ENCODE measurements at regions of chr2 and their contacts with region 1.

Region 1: DNA sequence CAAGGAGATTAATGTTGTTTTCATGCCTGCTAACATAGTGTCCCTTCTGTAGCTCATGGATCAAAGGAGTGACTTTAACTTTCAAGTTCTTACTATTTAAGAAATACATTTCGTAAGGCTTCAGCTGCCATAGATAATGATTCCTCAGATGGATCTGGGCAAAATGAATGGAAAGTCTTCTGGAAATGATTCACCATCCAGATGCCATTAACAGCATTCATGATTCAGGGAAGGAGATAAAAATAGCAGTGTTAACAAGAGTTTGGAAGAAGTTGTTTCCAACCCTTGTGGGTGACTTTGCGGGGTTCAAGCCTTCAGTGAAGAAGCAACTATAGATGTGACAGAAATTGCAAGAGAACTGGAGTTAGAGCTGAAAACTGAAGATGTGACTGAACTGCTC is 17.0 kb downstream of the VRK2 start:
- DNase-seq: no peak
- ATAC-seq: no peak
- H3K4me3 Mint-ChIP-seq: peak overlapping the region; percentile 50
- H3K27ac Mint-ChIP-seq: peak overlapping the region; percentile 74
- H3K4me1 Mint-ChIP-seq: peaks cover 38% of the 10 kb centered on the region
- H3K27me3 Mint-ChIP-seq: no peaks in the 10 kb centered on the region

Region 2: DNA sequence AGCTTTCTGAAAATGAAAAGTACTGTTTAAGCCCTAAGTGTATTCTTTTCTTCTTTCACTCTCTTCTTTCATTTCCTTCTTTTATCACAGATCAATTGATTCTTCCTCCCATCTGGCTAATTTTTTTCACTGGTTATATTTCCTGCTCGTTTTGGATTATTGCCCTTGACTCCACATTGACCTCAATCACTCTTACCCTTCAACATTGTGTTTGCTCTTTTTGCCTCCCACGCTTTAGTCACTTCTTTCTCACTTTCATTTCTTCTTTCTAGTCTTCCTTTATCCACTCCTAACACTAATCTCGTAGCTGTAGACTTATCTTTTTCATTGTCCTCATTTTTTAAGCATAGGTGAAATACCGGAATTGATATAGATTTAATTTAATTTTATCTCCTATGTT is 337.3 kb before region 1 on chr2:
- CTCF ChIA-PET with region 1: no interaction called
- POLR2A ChIA-PET with region 1: no interaction called
- DNase-seq: no peak
- ATAC-seq: no peak
- H3K4me3 Mint-ChIP-seq: no peak overlapping the region
- H3K27ac Mint-ChIP-seq: no peak overlapping the region
- H3K4me1 Mint-ChIP-seq: no peaks in the 10 kb centered on the region
- H3K27me3 Mint-ChIP-seq: peaks cover 2% of the 10 kb centered on the region

Region 3: DNA sequence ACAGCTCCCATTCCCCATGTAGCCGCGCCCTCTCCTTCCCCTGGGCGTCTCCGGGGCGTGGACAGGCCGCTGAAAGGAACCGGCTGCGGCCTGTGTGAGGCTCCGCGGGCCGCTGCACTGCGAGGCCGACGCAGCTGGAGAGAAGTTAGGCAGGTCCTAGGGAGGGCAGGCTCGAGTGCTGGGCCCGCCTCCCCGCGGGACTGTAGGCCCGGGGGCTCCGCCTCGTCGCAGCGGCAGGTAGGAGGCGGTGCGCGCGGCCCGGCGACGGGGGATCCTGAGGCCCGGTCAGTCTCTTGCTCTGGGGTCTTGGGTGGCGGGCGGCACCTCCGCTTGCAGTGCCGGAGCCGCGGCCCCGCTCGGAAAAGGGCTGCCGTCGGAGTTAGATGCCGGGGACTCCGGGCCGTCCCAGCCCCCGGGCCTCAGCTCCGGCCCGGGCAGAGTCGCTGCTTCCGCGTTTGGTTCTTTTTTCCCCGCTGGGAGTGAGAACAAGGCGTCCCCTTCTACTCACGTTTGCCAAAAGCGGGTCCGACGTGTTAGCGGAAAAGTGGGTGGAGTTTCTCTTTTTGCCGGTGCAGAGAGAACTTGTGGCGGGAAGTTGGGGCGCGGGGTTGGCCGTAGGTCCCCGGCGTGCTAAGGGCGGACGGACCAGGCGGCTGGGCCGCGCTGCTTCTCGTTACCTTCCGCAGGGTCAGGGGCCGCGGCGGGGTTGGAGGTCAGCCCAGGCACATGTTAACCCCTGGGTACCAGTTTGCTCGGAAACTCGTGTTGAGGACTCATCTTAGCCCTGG is 16.9 kb before region 1 on chr2 and contains the start of gene VRK2:
- CTCF ChIA-PET with region 1: interaction called, 4 read pairs
- POLR2A ChIA-PET with region 1: interaction called, 11 read pairs
- DNase-seq: peak; percentile 91
- ATAC-seq: peak; percentile 96
- H3K4me3 Mint-ChIP-seq: peak within 1 kb of the TSS; percentile 86
- H3K27ac Mint-ChIP-seq: peak within 1 kb of the TSS; percentile 96
- H3K4me1 Mint-ChIP-seq: peaks cover 36% of the 10 kb centered on the region
- H3K27me3 Mint-ChIP-seq: no peaks in the 10 kb centered on the region
- total RNA-seq, gene VRK2: 24.1 to 26.0 TPM